ENCODE measurements at regions of chr4 and their contacts with region 1.

Region 1: DNA sequence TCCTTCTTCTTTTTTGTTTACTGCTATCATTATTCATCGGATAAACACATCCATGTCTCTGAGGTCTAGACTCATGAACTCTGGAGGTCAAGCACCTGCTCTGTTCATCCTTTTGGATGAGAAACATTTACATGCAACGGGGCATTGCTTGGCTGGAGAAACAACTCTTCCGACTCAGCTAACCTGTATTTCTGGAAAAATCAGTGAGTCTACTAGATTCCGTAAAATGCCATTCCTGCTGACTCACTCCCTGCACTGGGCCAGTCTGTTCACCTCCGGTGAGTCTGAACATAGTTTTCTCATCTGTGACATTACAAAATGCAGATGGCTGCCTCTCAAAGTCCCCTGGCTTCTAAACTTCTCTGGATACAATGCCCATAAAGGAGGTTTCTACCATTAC is 185.7 kb upstream of the HS3ST1 start:
- DNase-seq: no peak
- H3K4me3 ChIP-seq: no peak overlapping the region
- H3K27ac ChIP-seq: no peak overlapping the region
- H3K4me1 ChIP-seq: no peaks in the 10 kb centered on the region
- H3K27me3 ChIP-seq: no peaks in the 10 kb centered on the region
- CTCF ChIP-seq: no peak

Region 2: DNA sequence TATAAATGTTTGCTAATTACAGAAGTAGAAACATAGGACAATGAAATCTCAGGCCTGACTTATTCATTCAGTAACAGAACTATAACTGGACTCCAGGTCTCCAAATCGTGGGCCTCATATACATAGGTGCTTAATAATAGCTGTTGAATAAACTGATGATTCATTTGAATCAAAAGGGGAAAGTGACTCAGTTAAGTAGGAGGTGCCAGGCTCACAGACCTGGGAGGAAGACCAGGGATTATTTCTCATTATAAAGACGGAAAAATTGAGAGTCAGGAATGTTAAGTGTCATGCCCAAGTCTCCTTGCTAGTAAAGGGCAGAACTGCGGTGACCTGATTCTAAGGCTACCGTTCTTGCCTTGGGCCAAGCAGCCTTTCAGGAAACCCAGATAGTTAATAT is 317.2 kb before region 1 on chr4:
- intact Hi-C with region 1: no loop called
- DNase-seq: no peak
- H3K4me3 ChIP-seq: no peak overlapping the region
- H3K27ac ChIP-seq: no peak overlapping the region
- H3K4me1 ChIP-seq: no peaks in the 10 kb centered on the region
- H3K27me3 ChIP-seq: no peaks in the 10 kb centered on the region
- CTCF ChIP-seq: no peak

Region 3: DNA sequence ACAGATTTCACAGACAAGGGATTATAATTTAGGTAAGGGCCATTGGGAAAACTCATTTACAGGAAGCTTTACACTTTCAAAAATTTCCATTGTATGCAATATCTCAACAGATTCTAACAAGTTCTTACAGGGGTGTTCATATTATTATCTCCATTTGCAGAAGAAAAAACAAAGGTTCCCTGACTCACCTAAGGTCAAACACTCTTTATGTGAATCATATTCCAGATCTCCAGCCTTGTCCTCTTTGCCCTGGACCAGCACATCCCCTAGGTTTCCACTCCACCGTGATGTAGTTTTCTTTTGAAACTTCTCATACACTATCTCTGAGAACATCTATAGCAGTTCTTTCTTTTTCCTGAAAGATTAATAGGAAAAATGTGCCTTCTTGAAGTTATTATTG is 89.3 kb before region 1 on chr4:
- intact Hi-C with region 1: no loop called
- DNase-seq: no peak
- H3K4me3 ChIP-seq: no peak overlapping the region
- H3K27ac ChIP-seq: no peak overlapping the region
- H3K4me1 ChIP-seq: no peaks in the 10 kb centered on the region
- H3K27me3 ChIP-seq: no peaks in the 10 kb centered on the region
- CTCF ChIP-seq: no peak

Region 4: GRCh38 chr4:11566444-11567022 is 47.9 kb before region 1 on chr4:
- intact Hi-C with region 1: loop called (anchors 10 kb)
- DNase-seq: no peak
- H3K4me3 ChIP-seq: no peak overlapping the region
- H3K27ac ChIP-seq: peak overlapping the region; percentile 37
- H3K4me1 ChIP-seq: no peaks in the 10 kb centered on the region
- H3K27me3 ChIP-seq: no peaks in the 10 kb centered on the region
- CTCF ChIP-seq: no peak

Measured in colonic mucosa (tissue), 4 donors.